CD8-positive, alpha-beta T cell (primary cell): ENCODE measurements at regions of chr4 and their contacts with region 1.

Region 1: DNA sequence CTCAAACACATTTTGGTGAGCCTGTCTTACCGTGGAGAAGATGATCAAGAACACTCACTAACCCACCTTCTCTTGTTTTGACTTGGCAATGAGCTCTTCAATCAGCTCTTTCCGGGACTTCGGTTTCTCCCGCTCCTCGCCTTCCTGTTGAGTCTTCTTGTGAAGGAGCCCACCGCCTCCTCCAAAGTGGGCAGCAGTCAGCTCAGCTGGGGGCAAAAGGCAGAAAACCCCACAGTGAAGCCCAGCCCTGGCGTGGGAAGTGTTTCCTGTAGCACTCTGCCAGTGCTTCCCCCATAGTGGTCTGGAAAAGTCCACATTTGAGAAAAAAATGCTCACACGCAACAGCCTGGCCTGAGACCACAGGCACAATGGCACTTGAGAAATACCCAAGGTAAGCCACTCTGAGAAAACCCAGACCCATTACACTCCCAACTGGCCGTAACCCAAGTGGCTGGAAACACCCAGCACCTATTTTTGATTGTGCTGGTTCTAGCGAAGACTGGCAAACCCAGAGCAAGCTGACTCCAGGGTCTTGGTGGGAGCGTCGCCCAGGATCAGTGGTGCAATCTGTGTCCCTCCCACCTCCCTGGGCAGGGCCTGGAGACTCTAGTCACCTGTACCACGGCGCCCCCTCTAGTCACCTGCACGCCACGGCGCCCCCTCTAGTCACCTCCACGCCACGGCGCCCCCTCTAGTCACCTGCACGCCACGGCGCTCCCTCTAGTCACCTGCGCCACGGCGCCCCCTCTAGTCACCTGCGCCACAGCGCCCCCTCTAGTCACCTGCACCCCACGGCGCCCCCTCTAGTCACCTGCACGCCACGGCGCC is 8.6 kb downstream of the NOP14 start:
- DNase-seq: peak in 5 of 9 experiments; percentile 39 to 80 (median 70)
- ATAC-seq: peak; percentile 80
- H3K4me3 ChIP-seq: no peak overlapping the region
- H3K4me3 Mint-ChIP-seq: no peak overlapping the region
- H3K27ac ChIP-seq: peak overlapping the region in 1 of 2 experiments; percentile 64
- H3K27ac Mint-ChIP-seq: peak overlapping the region; percentile 78
- H3K4me1 ChIP-seq: no peaks in the 10 kb centered on the region
- H3K4me1 Mint-ChIP-seq: peaks cover 29% of the 10 kb centered on the region
- H3K27me3 ChIP-seq: no peaks in the 10 kb centered on the region
- H3K27me3 Mint-ChIP-seq: no peaks in the 10 kb centered on the region
- CTCF ChIP-seq: peak; percentile 24

Region 2: DNA sequence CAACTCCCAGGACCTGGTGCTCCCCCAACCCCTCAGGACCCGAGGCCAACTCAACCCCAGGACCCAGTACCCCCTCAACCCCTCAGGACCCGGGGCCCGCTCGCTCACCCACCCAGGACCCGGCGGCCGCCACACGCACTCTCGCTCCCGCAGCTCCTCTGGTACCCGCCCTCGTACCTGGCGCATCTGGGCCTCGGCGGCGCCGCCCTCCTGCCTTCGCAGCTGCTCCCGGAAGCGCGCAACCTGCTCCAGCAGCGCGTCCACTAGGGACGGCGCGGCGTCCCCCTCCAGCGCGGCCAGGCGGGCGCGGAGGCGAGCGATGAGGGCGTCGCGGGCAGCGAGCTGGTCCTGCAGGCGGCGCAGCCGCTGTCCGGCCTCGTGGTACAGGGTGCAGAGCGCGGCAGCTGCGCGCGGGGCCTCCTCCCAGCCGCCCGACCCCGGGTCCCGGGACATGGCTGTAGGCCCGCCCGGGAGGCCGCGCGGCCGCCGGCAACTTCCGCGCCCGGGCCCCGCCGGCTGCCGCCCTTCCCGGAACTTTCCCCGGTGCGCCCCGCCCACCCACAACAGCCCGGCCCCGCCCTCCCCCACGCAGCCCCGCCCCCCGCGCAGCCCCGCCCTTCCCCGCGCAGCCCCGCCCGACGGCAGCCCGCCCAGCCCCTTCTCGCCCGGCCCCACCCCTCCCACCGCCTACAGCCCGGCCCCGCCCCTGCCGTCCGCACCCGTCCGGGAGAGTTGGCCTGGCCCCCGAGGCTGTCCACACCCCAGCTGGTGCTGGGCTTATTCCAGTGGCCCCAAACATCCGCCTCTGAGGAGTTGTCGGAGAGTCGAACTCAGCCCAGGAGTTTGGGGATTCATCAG is 198.5 kb before region 1 on chr4 and contains the start of gene TNIP2:
- CTCF ChIA-PET with region 1: no interaction called
- POLR2A ChIA-PET with region 1: no interaction called
- intact Hi-C with region 1: loop called in 1 of 2 experiments (anchors 2 kb)
- DNase-seq: peak; percentile 55 to 88 (median 75)
- ATAC-seq: peak; percentile 83
- H3K4me3 ChIP-seq: peak within 1 kb of the TSS; percentile 57 to 65
- H3K4me3 Mint-ChIP-seq: peak within 1 kb of the TSS; percentile 76
- H3K27ac ChIP-seq: peak within 1 kb of the TSS; percentile 19 to 63
- H3K27ac Mint-ChIP-seq: peak within 1 kb of the TSS; percentile 67
- H3K4me1 ChIP-seq: peaks cover 17% of the 10 kb centered on the region
- H3K4me1 Mint-ChIP-seq: peaks cover 37% of the 10 kb centered on the region
- H3K27me3 ChIP-seq: no peaks in the 10 kb centered on the region
- H3K27me3 Mint-ChIP-seq: no peaks in the 10 kb centered on the region
- CTCF ChIP-seq: peak; percentile 22
- total RNA-seq, gene TNIP2: 50.9 to 56.5 TPM

Region 3: DNA sequence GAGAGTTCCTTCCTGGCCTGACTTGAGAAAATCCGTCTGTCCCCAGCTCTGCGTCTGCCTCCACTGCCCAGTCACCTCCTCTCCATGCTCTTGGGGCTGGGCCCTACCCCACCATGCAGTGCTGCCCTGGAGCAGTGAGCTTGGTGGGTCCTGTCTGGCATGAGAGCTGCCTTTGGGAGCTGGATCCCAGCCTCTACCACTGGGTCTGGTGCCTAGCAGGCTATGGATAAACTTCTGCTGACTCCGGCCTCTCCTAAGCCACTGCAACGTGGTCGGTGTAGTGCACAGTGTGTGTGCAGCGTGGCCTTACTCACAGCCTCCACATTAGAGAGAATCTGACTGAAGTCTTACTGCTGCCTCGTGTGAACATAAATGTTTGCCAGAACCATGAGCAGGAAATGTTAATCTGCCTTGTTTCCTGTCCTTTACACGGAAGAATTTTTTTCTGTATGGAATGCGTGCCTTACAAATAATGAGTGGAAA is 167.6 kb after region 1 on chr4:
- CTCF ChIA-PET with region 1: no interaction called
- POLR2A ChIA-PET with region 1: no interaction called
- intact Hi-C with region 1: no loop called
- DNase-seq: no peak
- ATAC-seq: no peak
- H3K4me3 ChIP-seq: no peak overlapping the region
- H3K4me3 Mint-ChIP-seq: no peak overlapping the region
- H3K27ac ChIP-seq: no peak overlapping the region
- H3K27ac Mint-ChIP-seq: peak overlapping the region; percentile 19
- H3K4me1 ChIP-seq: peaks cover 5% of the 10 kb centered on the region
- H3K4me1 Mint-ChIP-seq: peaks cover 5% of the 10 kb centered on the region
- H3K27me3 ChIP-seq: no peaks in the 10 kb centered on the region
- H3K27me3 Mint-ChIP-seq: no peaks in the 10 kb centered on the region
- CTCF ChIP-seq: no peak